CD4-positive, alpha-beta T cell (primary cell): ENCODE measurements at regions of chr1 and their contacts with region 1.

Region 1: DNA sequence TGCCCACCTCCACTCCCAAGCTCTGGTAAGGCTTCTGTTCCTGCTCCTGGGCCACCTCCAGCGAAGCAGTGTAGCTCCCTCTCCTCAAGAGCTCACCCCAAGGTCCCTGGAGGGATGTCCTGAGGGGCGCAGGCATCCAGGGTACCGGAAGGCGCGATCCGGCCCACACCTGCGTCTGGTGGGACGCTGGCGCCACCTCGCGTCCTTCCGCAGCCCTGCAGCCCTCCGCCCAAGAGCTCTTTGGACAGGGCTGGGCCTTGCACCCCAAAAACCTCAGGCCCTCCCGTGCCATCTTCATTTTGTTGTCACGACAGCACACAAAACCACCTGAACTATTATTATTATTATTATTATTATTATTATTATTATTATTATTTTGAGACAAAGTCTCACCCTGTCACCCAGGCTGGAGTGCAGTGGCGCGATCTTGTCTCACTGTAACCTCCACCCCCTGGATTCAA is 49.2 kb upstream of the PAX7 start:
- DNase-seq: peak in 10 of 14 experiments; percentile 4 to 47 (median 15)
- ATAC-seq: no peak
- H3K4me3 ChIP-seq: no peak overlapping the region
- H3K4me3 Mint-ChIP-seq: no peak overlapping the region
- H3K27ac ChIP-seq: no peak overlapping the region
- H3K27ac Mint-ChIP-seq: no peak overlapping the region
- H3K4me1 ChIP-seq: no peaks in the 10 kb centered on the region
- H3K4me1 Mint-ChIP-seq: no peaks in the 10 kb centered on the region
- H3K27me3 ChIP-seq: peaks cover under 1 to 8% of the 10 kb centered on the region in 2 experiments
- H3K27me3 Mint-ChIP-seq: peaks cover 37% of the 10 kb centered on the region
- CTCF ChIP-seq: peak; percentile 36

Region 2: GRCh38 chr1:17653728-17654351 is 927.6 kb before region 1 on chr1:
- CTCF ChIA-PET with region 1: no interaction called
- POLR2A ChIA-PET with region 1: no interaction called
- intact Hi-C with region 1: loop called in 1 of 2 experiments (anchors 5 kb)
- DNase-seq: peak in 5 of 14 experiments; percentile 7 to 32 (median 10)
- ATAC-seq: no peak
- H3K4me3 ChIP-seq: no peak overlapping the region
- H3K4me3 Mint-ChIP-seq: no peak overlapping the region
- H3K27ac ChIP-seq: no peak overlapping the region
- H3K27ac Mint-ChIP-seq: no peak overlapping the region
- H3K4me1 ChIP-seq: no peaks in the 10 kb centered on the region
- H3K4me1 Mint-ChIP-seq: no peaks in the 10 kb centered on the region
- H3K27me3 ChIP-seq: no peaks in the 10 kb centered on the region
- H3K27me3 Mint-ChIP-seq: no peaks in the 10 kb centered on the region
- CTCF ChIP-seq: peak; percentile 44

Region 3: GRCh38 chr1:17696417-17697301 is 884.8 kb before region 1 on chr1:
- CTCF ChIA-PET with region 1: no interaction called
- POLR2A ChIA-PET with region 1: no interaction called
- intact Hi-C with region 1: no loop called
- DNase-seq: no peak
- ATAC-seq: no peak
- H3K4me3 ChIP-seq: no peak overlapping the region
- H3K4me3 Mint-ChIP-seq: no peak overlapping the region
- H3K27ac ChIP-seq: no peak overlapping the region
- H3K27ac Mint-ChIP-seq: no peak overlapping the region
- H3K4me1 ChIP-seq: no peaks in the 10 kb centered on the region
- H3K4me1 Mint-ChIP-seq: no peaks in the 10 kb centered on the region
- H3K27me3 ChIP-seq: no peaks in the 10 kb centered on the region
- H3K27me3 Mint-ChIP-seq: peaks cover 17% of the 10 kb centered on the region
- CTCF ChIP-seq: no peak